Colonic mucosa (tissue), 4 donors: ENCODE measurements at regions of chr4 and their contacts with region 1.

Region 1: DNA sequence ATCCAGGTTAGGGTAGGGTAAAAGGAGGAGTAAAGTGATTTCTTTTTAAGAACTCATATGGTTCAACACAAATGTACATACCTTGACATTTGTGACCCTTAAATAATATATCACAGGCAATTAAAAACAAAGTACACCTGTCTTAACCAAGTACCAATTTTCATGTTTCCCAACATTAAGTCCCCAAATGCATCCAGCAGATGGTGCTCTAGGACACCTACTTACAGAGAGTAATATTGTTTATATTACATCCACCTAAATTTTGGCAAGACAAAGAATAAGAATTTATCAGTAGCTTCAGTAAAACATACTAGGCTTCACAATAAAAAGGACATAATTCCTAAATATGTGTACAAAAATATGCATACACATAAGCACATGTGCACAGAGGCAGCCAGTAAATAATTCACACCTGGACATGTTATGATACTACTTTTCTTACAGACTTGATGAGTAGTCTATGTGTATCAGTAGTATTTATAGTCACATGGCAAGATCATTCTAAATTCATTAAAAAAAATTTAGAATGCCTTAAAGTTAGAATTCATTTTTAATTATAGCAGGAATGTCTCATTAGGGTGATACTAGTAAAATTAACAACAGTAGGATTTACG is 219.7 kb downstream of the DCLK2 start:
- DNase-seq: peak; percentile 53
- H3K4me3 ChIP-seq: no peak overlapping the region
- H3K27ac ChIP-seq: no peak overlapping the region
- H3K4me1 ChIP-seq: no peaks in the 10 kb centered on the region
- H3K27me3 ChIP-seq: no peaks in the 10 kb centered on the region
- CTCF ChIP-seq: peak; percentile 51

Region 2: GRCh38 chr4:150224896-150225591 is 72.9 kb before region 1 on chr4:
- intact Hi-C with region 1: no loop called
- DNase-seq: no peak
- H3K4me3 ChIP-seq: no peak overlapping the region
- H3K27ac ChIP-seq: peak overlapping the region; percentile 46
- H3K4me1 ChIP-seq: no peaks in the 10 kb centered on the region
- H3K27me3 ChIP-seq: no peaks in the 10 kb centered on the region
- CTCF ChIP-seq: no peak

Region 3: DNA sequence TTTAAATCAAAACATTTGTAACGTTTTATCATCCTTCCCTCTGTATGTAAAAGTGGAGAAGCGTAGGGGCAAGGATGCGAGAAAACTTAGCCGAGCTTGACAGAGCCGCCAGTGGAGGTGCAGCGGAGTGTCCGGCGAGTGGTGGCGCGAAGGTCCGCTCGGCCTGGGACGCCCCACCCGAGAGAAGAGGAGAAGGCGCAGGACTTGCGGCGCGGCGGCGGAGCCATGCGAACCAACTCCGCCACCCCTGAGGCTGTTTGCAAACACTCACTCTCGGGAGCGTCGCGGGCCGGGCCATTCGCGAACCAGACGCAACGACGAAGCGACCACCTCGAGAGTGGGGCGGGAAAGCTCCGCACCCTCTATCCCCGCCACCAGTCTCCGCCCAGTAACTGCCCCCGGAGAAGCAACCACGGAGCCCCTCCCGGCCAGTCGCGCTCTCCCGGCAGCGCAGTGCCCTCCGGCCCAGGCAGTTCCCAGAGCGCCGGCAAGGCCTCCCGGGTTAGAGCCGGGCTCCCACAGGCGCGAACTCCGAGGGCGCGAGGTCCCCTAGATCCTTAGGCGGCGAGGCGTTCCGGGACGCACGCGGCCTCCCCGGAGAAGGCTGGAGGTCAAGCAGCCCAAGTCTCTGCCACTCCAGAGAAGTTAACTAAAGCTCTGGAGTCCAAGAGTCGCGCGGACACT is 281.7 kb after region 1 on chr4:
- intact Hi-C with region 1: loop called (anchors 10 kb)
- DNase-seq: no peak
- H3K4me3 ChIP-seq: peak overlapping the region; percentile 13
- H3K27ac ChIP-seq: peak overlapping the region; percentile 53
- H3K4me1 ChIP-seq: no peaks in the 10 kb centered on the region
- H3K27me3 ChIP-seq: no peaks in the 10 kb centered on the region
- CTCF ChIP-seq: no peak

Region 4: DNA sequence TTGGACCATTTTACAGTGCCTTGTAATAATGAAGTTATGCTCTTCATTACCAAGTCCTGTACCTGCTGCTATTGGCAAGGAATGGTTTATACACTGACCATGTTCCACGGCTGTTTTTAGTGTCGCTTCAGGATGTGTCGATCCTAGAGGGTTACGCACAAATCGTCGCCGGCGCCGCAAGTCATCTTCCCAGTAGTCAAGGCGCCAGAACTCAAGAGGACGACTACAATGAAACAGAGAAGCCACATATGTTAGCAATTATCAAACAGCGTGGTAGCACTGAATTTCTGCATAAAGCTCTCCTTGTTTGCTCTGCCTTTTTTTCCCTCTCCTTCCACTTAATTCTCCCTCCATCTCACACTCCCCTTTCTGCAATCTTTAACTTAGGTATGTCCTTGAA is 300.9 kb after region 1 on chr4:
- intact Hi-C with region 1: loop called (anchors 5 kb)
- DNase-seq: no peak
- H3K4me3 ChIP-seq: no peak overlapping the region
- H3K27ac ChIP-seq: no peak overlapping the region
- H3K4me1 ChIP-seq: no peaks in the 10 kb centered on the region
- H3K27me3 ChIP-seq: no peaks in the 10 kb centered on the region
- CTCF ChIP-seq: no peak